ENCODE measurements at regions of chr10 and their contacts with region 1.

Region 1: GRCh38 chr10:33008499-33009243 is 50.6 kb upstream of the ITGB1 start:
- DNase-seq: no peak
- ATAC-seq: peak; percentile 33
- H3K4me3 Mint-ChIP-seq: peak overlapping the region; percentile 67
- H3K27ac Mint-ChIP-seq: no peak overlapping the region
- H3K4me1 Mint-ChIP-seq: peaks cover 41% of the 10 kb centered on the region
- H3K27me3 Mint-ChIP-seq: peaks cover 6% of the 10 kb centered on the region
- CTCF ChIP-seq: peak; percentile 85

Region 2: DNA sequence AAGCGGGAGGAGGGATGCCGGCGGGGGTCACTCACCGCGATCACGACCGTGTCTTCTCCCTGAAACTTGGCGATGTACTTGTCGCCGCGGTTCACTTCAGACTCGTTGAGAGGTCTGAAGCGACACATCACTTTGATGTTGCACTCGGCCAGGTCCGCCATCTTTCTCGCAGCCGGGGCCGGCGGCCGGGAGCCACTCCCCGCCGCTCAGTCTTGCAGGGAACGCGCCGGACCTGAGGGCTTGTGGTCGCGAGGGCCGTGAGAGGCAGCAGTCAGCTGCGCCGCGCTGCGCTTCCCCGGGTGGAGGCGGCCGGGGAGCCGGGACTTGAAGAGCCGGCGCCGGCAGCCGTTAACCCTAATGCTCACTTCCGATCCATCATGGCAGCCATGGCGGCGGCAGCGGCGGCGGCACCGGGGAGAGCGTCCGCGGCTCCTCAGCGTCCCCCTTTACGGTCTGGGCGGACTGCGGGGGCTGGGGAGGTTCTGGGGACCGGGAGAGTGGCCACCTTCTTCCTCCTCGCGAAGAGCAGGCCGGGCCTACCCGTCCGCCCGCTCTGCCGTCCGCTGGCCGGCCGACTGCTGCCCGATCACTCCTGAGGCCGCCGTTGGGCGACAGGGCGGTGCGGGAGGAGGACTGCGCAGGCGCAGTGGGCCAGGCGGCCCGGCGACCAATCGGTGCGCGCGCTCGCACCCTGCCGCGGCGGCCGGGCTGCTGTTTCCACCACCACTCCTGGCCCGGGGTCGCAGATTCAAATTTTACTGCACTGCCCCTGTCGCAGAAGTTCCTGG is 952.7 kb before region 1 on chr10 and contains the start of gene KIF5B:
- CTCF ChIA-PET with region 1: no interaction called
- POLR2A ChIA-PET with region 1: no interaction called
- intact Hi-C with region 1: loop called (anchors 5 kb)
- DNase-seq: peak; percentile 90
- ATAC-seq: peak; percentile 86
- H3K4me3 Mint-ChIP-seq: peak within 1 kb of the TSS; percentile 96
- H3K27ac Mint-ChIP-seq: peak within 1 kb of the TSS; percentile 90
- H3K4me1 Mint-ChIP-seq: peaks cover 56% of the 10 kb centered on the region
- H3K27me3 Mint-ChIP-seq: no peaks in the 10 kb centered on the region
- CTCF ChIP-seq: no peak
- total RNA-seq, gene KIF5B: 44.2 and 45.0 TPM in 2 replicates

Region 3: GRCh38 chr10:32378363-32379317 is 630.0 kb before region 1 on chr10:
- CTCF ChIA-PET with region 1: no interaction called
- POLR2A ChIA-PET with region 1: no interaction called
- intact Hi-C with region 1: loop called (anchors 5 kb)
- DNase-seq: peak; percentile 73
- ATAC-seq: peak; percentile 94
- H3K4me3 Mint-ChIP-seq: no peak overlapping the region
- H3K27ac Mint-ChIP-seq: no peak overlapping the region
- H3K4me1 Mint-ChIP-seq: peaks cover 21% of the 10 kb centered on the region
- H3K27me3 Mint-ChIP-seq: no peaks in the 10 kb centered on the region
- CTCF ChIP-seq: no peak

Region 4: DNA sequence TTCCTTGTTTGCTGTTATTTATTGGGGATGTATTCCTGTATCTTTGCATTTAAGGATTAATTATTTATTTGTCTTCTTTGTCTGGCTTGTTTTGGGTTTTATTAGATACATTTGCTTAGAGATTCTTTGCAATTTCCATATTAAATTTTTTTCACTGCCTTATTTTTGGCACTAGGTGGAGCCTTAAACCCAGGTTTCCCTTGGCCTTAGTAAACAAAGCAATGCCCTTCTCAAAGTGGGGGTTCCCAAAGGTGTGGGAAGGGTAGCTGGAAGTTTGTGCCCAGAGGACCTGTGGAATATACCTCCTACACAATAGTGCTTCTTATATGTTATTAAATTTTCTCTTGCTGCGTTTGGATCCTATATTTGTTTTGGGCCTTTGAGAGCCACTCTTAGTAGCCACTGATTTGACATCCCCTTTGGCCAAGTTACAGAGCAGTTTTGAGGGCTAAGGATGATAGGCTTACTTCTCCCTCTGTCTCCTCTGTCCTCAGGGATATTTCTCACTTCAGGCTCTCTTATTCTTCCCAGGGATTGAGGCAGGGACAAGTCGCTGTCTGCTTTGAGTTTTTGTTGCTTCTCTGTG is 213.0 kb before region 1 on chr10:
- CTCF ChIA-PET with region 1: interaction called, 18 read pairs
- POLR2A ChIA-PET with region 1: no interaction called
- intact Hi-C with region 1: loop called (anchors 1 kb)
- DNase-seq: no peak
- ATAC-seq: peak; percentile 45
- H3K4me3 Mint-ChIP-seq: no peak overlapping the region
- H3K27ac Mint-ChIP-seq: no peak overlapping the region
- H3K4me1 Mint-ChIP-seq: no peaks in the 10 kb centered on the region
- H3K27me3 Mint-ChIP-seq: no peaks in the 10 kb centered on the region
- CTCF ChIP-seq: peak; percentile 36

Region 5: GRCh38 chr10:32856387-32856786 is 152.3 kb before region 1 on chr10:
- CTCF ChIA-PET with region 1: no interaction called
- POLR2A ChIA-PET with region 1: no interaction called
- intact Hi-C with region 1: no loop called
- DNase-seq: no peak
- ATAC-seq: no peak
- H3K4me3 Mint-ChIP-seq: no peak overlapping the region
- H3K27ac Mint-ChIP-seq: no peak overlapping the region
- H3K4me1 Mint-ChIP-seq: no peaks in the 10 kb centered on the region
- H3K27me3 Mint-ChIP-seq: peaks cover 4% of the 10 kb centered on the region
- CTCF ChIP-seq: no peak

Region 6: GRCh38 chr10:32980558-32981468 is 27.9 kb before region 1 on chr10:
- CTCF ChIA-PET with region 1: interaction called, 11 read pairs
- POLR2A ChIA-PET with region 1: no interaction called
- intact Hi-C with region 1: no loop called
- DNase-seq: peak; percentile 57
- ATAC-seq: peak; percentile 97
- H3K4me3 Mint-ChIP-seq: peak overlapping the region; percentile 96
- H3K27ac Mint-ChIP-seq: peak overlapping the region; percentile 87
- H3K4me1 Mint-ChIP-seq: peaks cover 13% of the 10 kb centered on the region
- H3K27me3 Mint-ChIP-seq: no peaks in the 10 kb centered on the region
- CTCF ChIP-seq: no peak

Region 7: GRCh38 chr10:33155720-33156638 is 147.3 kb after region 1 on chr10:
- CTCF ChIA-PET with region 1: interaction called, 34 read pairs
- POLR2A ChIA-PET with region 1: interaction called, 3 read pairs
- intact Hi-C with region 1: loop called (anchors 1 kb)
- DNase-seq: no peak
- ATAC-seq: peak; percentile 65
- H3K4me3 Mint-ChIP-seq: no peak overlapping the region
- H3K27ac Mint-ChIP-seq: no peak overlapping the region
- H3K4me1 Mint-ChIP-seq: peaks cover 41% of the 10 kb centered on the region
- H3K27me3 Mint-ChIP-seq: peaks cover 2% of the 10 kb centered on the region
- CTCF ChIP-seq: no peak

Measured in activated B cell treated with CpG ODN at 0.5 μM for 24 hours (primary cell).